Activated B cell treated with CpG ODN at 0.5 μM for 24 hours (primary cell): ENCODE measurements at regions of chr14 and their contacts with region 1.

Region 1: GRCh38 chr14:22973217-22974032 is 8.9 kb downstream of the AJUBA start:
- DNase-seq: no peak
- ATAC-seq: peak; percentile 68
- H3K4me3 Mint-ChIP-seq: no peak overlapping the region
- H3K27ac Mint-ChIP-seq: no peak overlapping the region
- H3K4me1 Mint-ChIP-seq: peaks cover 5% of the 10 kb centered on the region
- H3K27me3 Mint-ChIP-seq: peaks cover 13% of the 10 kb centered on the region
- CTCF ChIP-seq: no peak

Region 2: GRCh38 chr14:21092273-21093011 is 1881.0 kb before region 1 on chr14:
- CTCF ChIA-PET with region 1: no interaction called
- POLR2A ChIA-PET with region 1: no interaction called
- intact Hi-C with region 1: no loop called
- DNase-seq: peak; percentile 94
- ATAC-seq: peak; percentile 99
- H3K4me3 Mint-ChIP-seq: no peak overlapping the region
- H3K27ac Mint-ChIP-seq: no peak overlapping the region
- H3K4me1 Mint-ChIP-seq: peaks cover 18% of the 10 kb centered on the region
- H3K27me3 Mint-ChIP-seq: no peaks in the 10 kb centered on the region
- CTCF ChIP-seq: peak; percentile 98

Region 3: DNA sequence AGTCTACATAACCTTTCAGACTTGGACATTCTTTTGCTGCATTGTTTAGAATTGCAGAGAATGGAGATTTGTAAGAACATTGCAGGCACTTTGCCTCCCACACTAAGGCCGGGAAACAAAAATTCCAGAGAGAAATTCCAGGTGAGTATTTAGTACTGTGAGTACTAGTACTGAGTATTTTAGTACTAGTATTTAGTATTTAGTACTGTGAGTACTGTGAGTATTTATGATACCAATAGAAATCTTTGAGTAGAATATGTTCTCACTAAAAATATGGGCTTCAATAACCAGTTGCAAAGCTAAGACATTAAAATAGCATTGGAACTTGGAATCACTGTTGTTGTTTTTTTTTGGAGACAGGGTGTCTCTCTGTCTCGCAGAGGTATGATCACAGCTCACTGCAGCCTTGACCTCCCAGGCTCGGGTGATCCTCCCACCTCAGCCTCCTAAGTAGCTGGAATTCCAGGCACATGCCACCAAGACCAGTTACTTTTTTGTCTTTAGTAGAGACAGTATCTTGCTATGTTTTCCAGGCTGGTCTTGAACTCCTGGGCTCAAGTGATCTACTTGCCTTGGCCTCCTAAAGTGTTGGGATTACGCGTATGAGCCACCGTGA is 11.3 kb before region 1 on chr14:
- CTCF ChIA-PET with region 1: interaction called, 14 read pairs
- POLR2A ChIA-PET with region 1: interaction called, 8 read pairs
- intact Hi-C with region 1: no loop called
- DNase-seq: no peak
- ATAC-seq: no peak
- H3K4me3 Mint-ChIP-seq: no peak overlapping the region
- H3K27ac Mint-ChIP-seq: no peak overlapping the region
- H3K4me1 Mint-ChIP-seq: peaks cover 3% of the 10 kb centered on the region
- H3K27me3 Mint-ChIP-seq: no peaks in the 10 kb centered on the region
- CTCF ChIP-seq: no peak

Region 4: DNA sequence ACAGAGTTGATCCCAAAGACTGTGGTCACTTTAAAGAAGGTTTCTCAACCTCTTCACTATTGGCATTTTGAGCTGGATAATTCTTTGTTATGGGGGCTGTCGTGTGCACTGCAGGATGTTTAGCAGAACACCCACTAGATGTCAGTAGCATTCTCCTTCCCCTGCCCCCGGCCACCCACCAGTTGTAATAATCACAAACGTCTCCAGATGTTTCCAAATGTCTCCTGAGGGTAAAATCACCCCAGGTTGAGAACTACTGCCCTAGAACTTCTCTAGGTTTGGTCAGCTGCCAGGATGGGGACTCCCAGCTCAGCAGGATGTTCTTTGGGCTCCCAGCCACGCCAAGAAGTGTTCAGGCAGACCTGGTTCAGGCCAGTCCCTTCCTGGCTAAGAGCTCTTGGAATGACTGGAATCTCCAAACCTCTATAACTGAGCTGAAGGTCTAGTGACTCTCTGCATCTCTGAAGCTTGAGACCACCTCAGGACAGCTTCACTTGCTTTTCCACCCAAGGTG is 21.4 kb after region 1 on chr14:
- CTCF ChIA-PET with region 1: interaction called, 16 read pairs
- POLR2A ChIA-PET with region 1: interaction called, 5 read pairs
- intact Hi-C with region 1: no loop called
- DNase-seq: no peak
- ATAC-seq: peak; percentile 73
- H3K4me3 Mint-ChIP-seq: no peak overlapping the region
- H3K27ac Mint-ChIP-seq: no peak overlapping the region
- H3K4me1 Mint-ChIP-seq: peaks cover 3% of the 10 kb centered on the region
- H3K27me3 Mint-ChIP-seq: no peaks in the 10 kb centered on the region
- CTCF ChIP-seq: no peak

Region 5: DNA sequence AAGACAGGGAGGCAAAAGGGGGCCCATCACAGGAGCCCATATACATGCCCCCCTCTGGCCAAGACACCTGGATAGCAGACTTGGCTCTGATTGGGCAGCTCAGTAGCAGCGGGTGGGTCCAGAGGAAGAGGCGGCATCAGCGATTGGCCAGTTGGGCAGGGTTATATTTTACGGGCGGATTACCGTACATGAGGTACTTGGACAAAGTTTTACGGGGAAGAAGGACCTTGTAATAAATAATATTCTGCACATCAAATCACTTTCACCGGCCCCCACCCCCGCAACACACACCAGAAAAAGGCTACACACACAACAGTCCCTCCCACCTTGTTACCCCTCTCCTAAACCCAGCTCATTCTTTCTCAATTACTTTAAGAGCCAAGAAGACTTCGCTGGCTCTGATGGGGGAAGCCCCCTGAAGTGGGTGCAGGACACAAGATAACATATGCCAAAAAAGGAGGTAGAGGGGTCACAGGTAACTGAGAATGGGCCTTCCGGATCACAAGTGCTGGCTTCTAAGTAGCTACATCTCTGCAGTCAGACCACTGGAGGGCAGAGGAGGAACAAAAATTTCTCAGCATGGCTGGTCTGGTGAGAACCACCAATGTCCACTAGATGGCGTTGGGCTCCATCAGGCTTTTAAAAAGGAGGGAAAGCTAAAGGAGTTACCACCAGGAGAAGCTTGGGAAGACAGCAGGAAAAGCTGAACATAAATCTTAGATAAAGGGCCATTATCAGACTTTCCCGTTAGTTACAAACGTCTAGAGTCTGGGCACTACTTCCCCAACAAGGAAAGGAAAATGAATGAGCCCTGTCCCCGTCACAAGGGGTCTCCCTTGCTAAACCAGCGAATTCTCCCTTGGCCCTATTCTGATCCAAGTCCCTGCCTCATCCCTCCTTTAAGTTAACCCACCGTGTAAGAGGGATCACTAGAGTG is 95.3 kb after region 1 on chr14:
- CTCF ChIA-PET with region 1: interaction called, 14 read pairs
- POLR2A ChIA-PET with region 1: no interaction called
- intact Hi-C with region 1: no loop called
- DNase-seq: no peak
- ATAC-seq: peak; percentile 85
- H3K4me3 Mint-ChIP-seq: peak overlapping the region; percentile 22
- H3K27ac Mint-ChIP-seq: peak overlapping the region; percentile 50
- H3K4me1 Mint-ChIP-seq: peaks cover 36% of the 10 kb centered on the region
- H3K27me3 Mint-ChIP-seq: no peaks in the 10 kb centered on the region
- CTCF ChIP-seq: peak; percentile 79

Region 6: DNA sequence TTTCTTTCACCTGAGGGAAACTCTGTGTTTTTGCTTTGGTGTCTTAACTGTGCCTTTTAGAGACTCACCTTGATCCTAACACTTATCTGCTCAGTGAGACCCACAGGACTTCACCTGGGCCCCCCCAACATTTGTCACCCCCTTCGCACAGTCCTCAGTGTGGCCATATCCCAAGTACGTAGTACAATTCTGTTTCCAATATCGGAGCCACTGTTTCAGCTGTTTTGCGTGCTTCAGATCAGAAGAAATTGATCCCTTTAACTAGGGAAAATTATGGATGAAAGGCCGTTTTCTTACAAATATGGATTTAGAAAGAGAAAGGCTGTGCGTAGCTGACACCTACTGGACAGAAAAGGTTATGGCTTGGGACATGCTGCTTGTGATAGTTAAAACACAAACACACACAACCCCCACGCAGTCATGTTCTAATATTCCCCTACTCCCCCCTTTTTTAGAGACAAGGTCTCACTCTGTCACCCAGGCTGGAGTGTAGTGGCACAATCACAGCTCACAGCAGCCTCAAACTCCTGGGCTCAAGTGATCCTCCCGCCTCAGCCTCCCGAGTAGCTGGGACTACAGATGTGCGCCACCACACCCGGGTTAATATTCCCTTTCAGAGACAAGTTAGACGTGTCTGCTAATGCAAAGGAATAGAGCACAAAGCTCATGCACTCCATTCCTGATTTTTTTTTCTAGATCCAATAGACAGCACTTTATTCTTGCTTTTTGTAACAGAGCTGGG is 213.7 kb after region 1 on chr14:
- CTCF ChIA-PET with region 1: interaction called, 3 read pairs
- POLR2A ChIA-PET with region 1: no interaction called
- intact Hi-C with region 1: loop called (anchors 5 kb)
- DNase-seq: no peak
- ATAC-seq: peak; percentile 45
- H3K4me3 Mint-ChIP-seq: no peak overlapping the region
- H3K27ac Mint-ChIP-seq: no peak overlapping the region
- H3K4me1 Mint-ChIP-seq: no peaks in the 10 kb centered on the region
- H3K27me3 Mint-ChIP-seq: peaks cover 2% of the 10 kb centered on the region
- CTCF ChIP-seq: no peak